ENCODE measurements at regions of chr5 and their contacts with region 1.

Region 1: GRCh38 chr5:77491783-77492652 is at the start of gene WDR41:
- DNase-seq: peak; percentile 91 to 98
- H3K4me3 ChIP-seq: peak within 1 kb of the TSS; percentile 72 to 85 (median 77)
- H3K27ac ChIP-seq: peak within 1 kb of the TSS; percentile 95 to 97 (median 96)
- H3K4me1 ChIP-seq: peaks cover 5 to 39% (median 18%) of the 10 kb centered on the region in 4 donors
- H3K27me3 ChIP-seq: no peaks in the 10 kb centered on the region
- CTCF ChIP-seq: peak in 5 of 7 experiments; percentile 75 to 96 (median 95)
- EP300 ChIP-seq: no peak
- POLR2A ChIP-seq: peak in 1 of 4 donors; percentile 7
- total RNA-seq, gene WDR41: 17.5 to 103 (median 46.1) TPM

Region 2: DNA sequence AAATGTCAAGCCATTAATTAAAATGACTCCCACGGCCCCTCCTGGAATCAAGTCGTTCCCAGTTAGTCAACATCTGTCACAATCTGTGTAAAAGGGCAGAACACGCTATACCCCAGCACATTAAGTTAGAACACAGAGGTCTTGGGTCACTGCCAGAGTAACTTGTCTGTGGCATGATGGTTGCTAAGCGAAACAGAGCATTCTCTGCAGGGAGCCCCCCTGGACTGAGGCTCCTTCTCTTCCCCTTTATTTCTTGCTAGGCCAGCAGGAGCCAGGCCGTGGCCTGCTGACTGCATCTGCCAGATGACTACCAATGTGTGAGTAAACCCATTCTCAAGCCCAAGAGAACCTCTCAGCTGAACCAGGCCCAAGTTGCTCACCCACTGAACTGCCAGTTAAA is 353.0 kb before region 1 on chr5:
- intact Hi-C with region 1: loop called (anchors 5 kb)
- DNase-seq: peak in 1 of 2 donors; percentile 63
- H3K4me3 ChIP-seq: no peak overlapping the region
- H3K27ac ChIP-seq: peak overlapping the region in 1 of 5 donors; percentile 35
- H3K4me1 ChIP-seq: peaks cover 0 to 15% (median 9%) of the 10 kb centered on the region in 4 donors
- H3K27me3 ChIP-seq: no peaks in the 10 kb centered on the region
- CTCF ChIP-seq: no peak
- EP300 ChIP-seq: peak; percentile 17
- POLR2A ChIP-seq: no peak

Region 3: GRCh38 chr5:77662635-77663034 is 170.6 kb after region 1 on chr5:
- intact Hi-C with region 1: no loop called
- DNase-seq: no peak
- H3K4me3 ChIP-seq: no peak overlapping the region
- H3K27ac ChIP-seq: no peak overlapping the region
- H3K4me1 ChIP-seq: no peaks in the 10 kb centered on the region
- H3K27me3 ChIP-seq: peaks cover 0 to 34% (median 0%) of the 10 kb centered on the region in 3 donors
- CTCF ChIP-seq: no peak
- EP300 ChIP-seq: no peak
- POLR2A ChIP-seq: no peak